ENCODE measurements at regions of chr6 and their contacts with region 1.

Region 1: DNA sequence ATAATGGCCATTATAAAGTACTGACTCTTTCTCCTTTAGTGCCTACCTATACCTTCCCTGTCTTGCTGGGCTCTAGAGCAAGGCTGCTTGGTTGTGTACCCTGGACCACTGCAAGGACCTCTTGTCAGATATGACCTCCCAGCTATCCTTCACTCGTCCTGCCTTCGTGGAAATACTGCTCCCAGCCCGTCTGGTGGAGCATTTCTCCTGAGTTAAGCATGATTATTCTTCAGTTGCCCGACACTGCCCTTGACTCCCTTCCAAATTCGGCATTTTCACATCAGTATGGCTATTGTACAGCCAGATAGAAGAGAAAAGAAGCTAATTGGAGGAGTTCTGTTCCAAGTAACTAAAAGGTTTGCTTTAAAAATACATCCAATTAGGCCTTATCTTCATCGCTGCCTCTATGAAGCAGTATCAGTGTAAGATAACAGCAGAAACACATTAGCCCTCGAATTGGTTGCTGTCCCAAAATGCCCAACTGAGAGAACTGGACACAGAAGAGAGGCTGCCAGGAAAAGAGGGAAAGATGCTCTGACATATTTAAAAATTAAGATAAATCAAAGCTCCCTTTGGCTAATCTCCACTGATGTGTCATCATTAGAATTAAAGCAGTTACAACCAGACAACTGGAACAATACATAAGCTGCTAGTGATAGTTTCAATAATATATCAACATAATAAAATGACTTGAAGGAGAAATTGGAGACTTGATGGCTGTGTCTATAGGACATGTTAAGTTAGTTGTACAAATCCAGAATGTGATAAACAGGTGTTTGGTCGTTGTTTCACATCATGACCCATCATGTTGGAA is 54.4 kb downstream of the OPRM1 start:
- DNase-seq: no peak
- H3K4me3 ChIP-seq: no peak overlapping the region
- H3K27ac ChIP-seq: no peak overlapping the region
- H3K27me3 ChIP-seq: no peaks in the 10 kb centered on the region
- CTCF ChIP-seq: no peak

Region 2: GRCh38 chr6:154002894-154003293 is 90.5 kb before region 1 on chr6:
- CTCF ChIA-PET with region 1: interaction called, 13 read pairs
- POLR2A ChIA-PET with region 1: no interaction called
- DNase-seq: no peak
- H3K4me3 ChIP-seq: no peak overlapping the region
- H3K27ac ChIP-seq: no peak overlapping the region
- H3K27me3 ChIP-seq: no peaks in the 10 kb centered on the region
- CTCF ChIP-seq: no peak

Region 3: GRCh38 chr6:154053141-154053540 is 40.3 kb before region 1 on chr6:
- CTCF ChIA-PET with region 1: no interaction called
- POLR2A ChIA-PET with region 1: no interaction called
- DNase-seq: no peak
- H3K4me3 ChIP-seq: no peak overlapping the region
- H3K27ac ChIP-seq: no peak overlapping the region
- H3K27me3 ChIP-seq: no peaks in the 10 kb centered on the region
- CTCF ChIP-seq: no peak

Measured in AG04450 (cell line).